ENCODE measurements at regions of chr10 and their contacts with region 1.

Region 1: GRCh38 chr10:63504125-63504880 is 16.9 kb upstream of the REEP3 start:
- DNase-seq: no peak
- H3K4me3 ChIP-seq: no peak overlapping the region
- H3K27ac ChIP-seq: no peak overlapping the region
- H3K4me1 ChIP-seq: peaks cover 0 to 22% (median 5%) of the 10 kb centered on the region in 4 donors
- H3K27me3 ChIP-seq: no peaks in the 10 kb centered on the region
- CTCF ChIP-seq: no peak
- EP300 ChIP-seq: no peak
- POLR2A ChIP-seq: no peak

Region 2: GRCh38 chr10:62162266-62162981 is 1341.9 kb before region 1 on chr10:
- in situ Hi-C with region 1: no loop called
- intact Hi-C with region 1: loop called (anchors 5 kb)
- DNase-seq: no peak
- H3K4me3 ChIP-seq: no peak overlapping the region
- H3K27ac ChIP-seq: no peak overlapping the region
- H3K4me1 ChIP-seq: peaks cover 0 to 16% (median 5%) of the 10 kb centered on the region in 4 donors
- H3K27me3 ChIP-seq: no peaks in the 10 kb centered on the region
- CTCF ChIP-seq: no peak
- EP300 ChIP-seq: no peak
- POLR2A ChIP-seq: no peak